ENCODE measurements at regions of chr3 and their contacts with region 1.

Region 1: DNA sequence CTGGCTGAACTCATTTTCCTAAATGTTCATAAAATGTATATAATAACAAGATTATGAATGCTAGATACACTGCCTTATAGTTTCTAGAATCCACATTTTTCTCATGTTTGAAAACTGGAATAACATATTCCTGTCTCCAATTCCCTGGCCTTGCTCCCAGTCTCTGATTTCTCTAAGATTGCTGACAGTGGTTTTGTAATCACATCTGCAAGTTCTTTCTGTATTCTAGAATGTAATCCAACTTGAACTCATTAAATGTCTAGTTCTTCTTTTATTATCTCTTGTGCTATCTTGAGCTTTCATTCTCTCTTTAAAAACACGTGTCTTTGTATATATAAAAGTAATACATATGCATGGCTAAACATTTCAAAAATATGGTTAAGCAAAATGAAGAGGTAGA is 215.2 kb upstream of the ADAMTS9 start:
- DNase-seq: no peak
- H3K4me3 ChIP-seq: no peak overlapping the region
- H3K27ac ChIP-seq: no peak overlapping the region
- H3K4me1 ChIP-seq: peaks cover 6 to 26% of the 10 kb centered on the region in 2 donors
- H3K27me3 ChIP-seq: no peaks in the 10 kb centered on the region
- CTCF ChIP-seq: no peak

Region 2: DNA sequence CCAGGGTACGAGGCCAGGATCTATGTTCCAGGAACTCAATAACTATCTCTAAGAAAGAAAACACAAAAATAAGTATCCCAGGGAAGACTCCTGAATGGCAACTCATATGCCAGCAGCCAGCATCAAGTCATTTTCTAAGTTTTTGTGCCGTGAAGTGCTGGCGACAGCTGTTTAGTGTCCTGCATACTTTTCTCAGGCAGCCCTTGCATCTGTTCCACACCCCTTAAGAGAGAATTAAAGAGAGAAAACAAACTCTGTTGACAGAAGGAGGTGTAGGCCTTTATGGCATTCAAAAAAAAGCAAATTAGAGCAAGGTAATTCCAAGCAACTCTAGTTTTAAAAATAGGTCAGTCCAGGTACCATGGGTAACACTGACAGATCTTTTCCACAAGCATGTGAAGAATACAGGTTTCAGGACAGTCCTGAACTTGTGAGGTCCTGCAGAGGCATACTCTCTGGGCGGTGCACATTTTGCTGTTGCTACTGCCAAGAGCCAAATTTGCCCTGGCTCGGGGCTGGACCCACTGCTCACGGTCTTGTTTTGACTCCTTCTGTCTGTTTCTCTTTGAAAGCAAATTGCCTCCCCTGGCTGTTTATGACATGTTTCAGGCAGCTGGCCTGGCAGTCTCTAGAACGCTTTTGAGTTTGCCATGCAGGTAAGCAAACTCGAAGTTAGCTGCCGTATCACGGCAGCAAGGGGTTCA is 36.9 kb after region 1 on chr3:
- intact Hi-C with region 1: loop called (anchors 5 kb)
- DNase-seq: no peak
- H3K4me3 ChIP-seq: no peak overlapping the region
- H3K27ac ChIP-seq: no peak overlapping the region
- H3K4me1 ChIP-seq: peaks cover 3 to 16% of the 10 kb centered on the region in 2 donors
- H3K27me3 ChIP-seq: no peaks in the 10 kb centered on the region
- CTCF ChIP-seq: no peak